ENCODE measurements at regions of chr3 and their contacts with region 1.

Region 1: GRCh38 chr3:151171145-151171757 is 31.8 kb downstream of the GPR171 start:
- DNase-seq: peak in 1 of 2 donors; percentile 51
- H3K4me3 ChIP-seq: no peak overlapping the region
- H3K27ac ChIP-seq: peak overlapping the region in 4 of 5 donors; percentile 31 to 64 (median 42)
- H3K4me1 ChIP-seq: peaks cover 0 to 27% (median 4%) of the 10 kb centered on the region in 4 donors
- H3K27me3 ChIP-seq: no peaks in the 10 kb centered on the region
- CTCF ChIP-seq: no peak
- EP300 ChIP-seq: no peak
- POLR2A ChIP-seq: no peak

Region 2: GRCh38 chr3:151289326-151289844 is 118.1 kb after region 1 on chr3:
- intact Hi-C with region 1: loop called (anchors 5 kb)
- DNase-seq: no peak
- H3K4me3 ChIP-seq: no peak overlapping the region
- H3K27ac ChIP-seq: no peak overlapping the region
- H3K4me1 ChIP-seq: peaks cover 0 to 4% (median 4%) of the 10 kb centered on the region in 4 donors
- H3K27me3 ChIP-seq: no peaks in the 10 kb centered on the region
- CTCF ChIP-seq: no peak
- EP300 ChIP-seq: no peak
- POLR2A ChIP-seq: no peak

Measured in stomach (tissue), 19 donors.